ENCODE measurements at regions of chr6 and their contacts with region 1.

Region 1: GRCh38 chr6:70599187-70599586 is 32.5 kb downstream of the SDHAF4 start:
- DNase-seq: no peak
- H3K4me3 ChIP-seq: no peak overlapping the region
- H3K27ac ChIP-seq: no peak overlapping the region
- H3K4me1 ChIP-seq: no peaks in the 10 kb centered on the region
- H3K27me3 ChIP-seq: no peaks in the 10 kb centered on the region
- CTCF ChIP-seq: no peak
- EP300 ChIP-seq: no peak
- POLR2A ChIP-seq: no peak

Region 2: DNA sequence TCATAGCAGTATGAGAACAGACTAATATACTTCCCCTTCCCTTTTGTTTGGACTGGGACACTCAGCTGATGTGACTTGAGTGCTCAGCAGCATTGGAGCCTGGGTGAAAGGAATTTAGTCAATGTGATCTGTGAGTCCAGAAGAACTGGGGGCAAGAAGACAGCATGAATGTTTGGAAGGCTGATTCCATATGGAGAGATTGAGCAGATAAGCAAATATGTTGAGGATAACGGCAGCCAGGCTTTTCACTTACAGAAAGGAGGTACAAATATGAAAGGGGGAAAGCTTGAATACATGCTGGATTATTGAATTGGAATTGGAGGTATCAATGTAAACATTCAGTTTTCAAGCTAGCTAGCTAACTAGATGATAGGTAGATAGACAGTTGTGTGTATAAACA is 30.7 kb after region 1 on chr6:
- in situ Hi-C with region 1: no loop called
- intact Hi-C with region 1: loop called (anchors 1 kb)
- DNase-seq: no peak
- H3K4me3 ChIP-seq: no peak overlapping the region
- H3K27ac ChIP-seq: no peak overlapping the region
- H3K4me1 ChIP-seq: peaks cover 0 to 4% (median 0%) of the 10 kb centered on the region in 4 donors
- H3K27me3 ChIP-seq: no peaks in the 10 kb centered on the region
- CTCF ChIP-seq: no peak
- EP300 ChIP-seq: no peak
- POLR2A ChIP-seq: no peak

Region 3: DNA sequence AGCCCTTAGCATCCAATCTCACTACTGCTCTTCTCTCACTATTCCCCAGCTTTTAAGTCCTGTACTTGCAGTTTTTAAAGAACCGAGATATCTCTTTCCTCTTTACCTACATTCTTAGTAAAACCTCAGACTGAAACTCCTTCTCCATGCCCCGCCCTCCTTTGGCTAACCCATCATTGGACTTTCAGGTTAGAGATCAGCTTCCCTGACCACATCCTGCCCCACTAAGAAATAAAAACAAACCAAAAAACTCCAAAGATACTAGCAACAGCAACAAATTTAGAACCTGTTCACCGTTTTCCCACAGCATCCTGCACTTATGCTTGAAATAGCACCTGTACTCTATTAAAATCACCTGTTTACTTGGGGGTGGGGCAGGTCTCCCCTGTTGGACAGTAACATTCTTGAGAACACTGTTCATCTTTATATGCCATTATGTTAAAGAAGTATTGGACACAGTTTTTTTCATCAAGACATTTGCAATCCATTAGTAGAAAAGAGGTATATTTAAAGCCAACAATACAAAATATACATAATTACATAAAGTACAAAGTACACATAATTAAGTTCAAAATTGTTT is 52.2 kb after region 1 on chr6:
- in situ Hi-C with region 1: no loop called
- intact Hi-C with region 1: loop called (anchors 1 kb)
- DNase-seq: peak; percentile 32
- H3K4me3 ChIP-seq: no peak overlapping the region
- H3K27ac ChIP-seq: no peak overlapping the region
- H3K4me1 ChIP-seq: no peaks in the 10 kb centered on the region
- H3K27me3 ChIP-seq: no peaks in the 10 kb centered on the region
- CTCF ChIP-seq: no peak
- EP300 ChIP-seq: no peak
- POLR2A ChIP-seq: no peak

Measured in transverse colon (tissue), 4 donors.